ENCODE measurements at regions of chr9 and their contacts with region 1.

Region 1: DNA sequence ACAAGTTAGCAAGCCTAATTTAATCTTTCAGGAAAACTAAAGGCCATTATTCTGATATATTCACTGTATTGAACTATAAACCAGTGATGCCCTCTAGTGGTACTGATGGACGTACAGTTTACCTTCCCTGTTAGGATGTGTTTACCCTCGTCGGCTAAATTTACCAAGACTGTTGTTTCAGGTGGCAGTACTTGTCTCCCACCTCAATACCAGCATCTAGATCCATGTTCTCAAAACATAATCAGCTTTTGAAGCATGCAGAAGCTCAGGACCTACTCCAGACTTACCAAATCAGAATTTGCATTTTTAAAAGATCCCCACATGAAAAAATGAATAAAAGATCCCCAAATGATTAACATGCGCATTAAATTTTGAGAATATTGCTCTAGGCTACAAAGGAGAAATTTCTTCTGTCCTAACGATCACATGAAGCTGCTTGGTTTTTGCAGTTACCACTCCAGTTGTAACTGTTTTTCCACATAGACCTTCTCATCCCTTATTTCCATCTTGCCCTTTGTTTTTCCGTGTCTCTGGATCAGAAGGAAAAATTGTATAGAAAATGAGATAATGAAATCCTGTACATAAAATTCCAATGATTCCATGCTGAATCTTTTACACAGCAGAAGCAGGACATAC is 3.2 kb upstream of the BAAT start:
- DNase-seq: peak in 2 of 4 experiments; percentile 33 to 76
- ATAC-seq: peak; percentile 98
- H3K4me3 ChIP-seq: no peak overlapping the region
- H3K27ac ChIP-seq: no peak overlapping the region
- H3K4me1 ChIP-seq: no peaks in the 10 kb centered on the region
- H3K27me3 ChIP-seq: no peaks in the 10 kb centered on the region
- CTCF ChIP-seq: peak; percentile 47 to 74 (median 55); a peak in 3 of 6 replicates
- EP300 ChIP-seq: no peak
- POLR2A ChIP-seq: no peak
- RAD21 ChIP-seq: peak; percentile 15 to 53; a peak in 2 of 4 replicates

Region 2: DNA sequence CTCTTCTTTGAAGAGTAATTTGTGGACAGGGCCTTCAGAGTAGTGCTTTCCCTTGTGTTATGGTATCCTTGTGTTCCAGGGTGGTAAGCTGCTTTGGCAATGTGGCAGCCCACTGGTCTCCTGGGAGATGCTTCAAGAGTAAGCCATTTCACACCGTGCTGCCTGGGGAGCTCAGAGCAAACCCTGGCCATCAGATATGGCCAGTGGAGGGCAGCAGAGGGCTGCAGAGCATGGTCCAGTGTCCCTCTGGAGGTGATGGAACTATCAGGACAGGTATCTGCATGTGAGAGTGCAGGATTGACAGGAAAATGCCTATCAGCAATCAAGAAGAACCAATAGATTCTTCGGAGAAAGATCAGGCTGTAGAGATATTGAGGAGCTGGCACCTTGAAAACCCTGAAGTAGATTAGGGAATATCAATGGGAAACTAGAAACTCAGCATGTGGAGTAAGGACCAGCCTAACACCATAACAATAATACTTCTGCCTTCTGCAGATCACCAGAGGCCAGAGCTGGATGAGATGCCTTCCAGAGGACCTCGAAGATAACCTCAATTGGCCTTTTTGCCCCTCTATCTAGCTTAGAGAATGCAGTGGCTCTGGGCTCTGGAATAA is 268.7 kb before region 1 on chr9:
- CTCF ChIA-PET with region 1: no interaction called
- POLR2A ChIA-PET with region 1: no interaction called
- in situ Hi-C with region 1: no loop called
- intact Hi-C with region 1: loop called (anchors 2 kb)
- DNase-seq: peak; percentile 29 to 47 (median 38)
- ATAC-seq: peak; percentile 88
- H3K4me3 ChIP-seq: no peak overlapping the region
- H3K27ac ChIP-seq: no peak overlapping the region
- H3K4me1 ChIP-seq: no peaks in the 10 kb centered on the region
- H3K27me3 ChIP-seq: no peaks in the 10 kb centered on the region
- CTCF ChIP-seq: peak; percentile 54 to 70 (median 54)
- EP300 ChIP-seq: no peak
- POLR2A ChIP-seq: no peak
- RAD21 ChIP-seq: peak; percentile 34 to 61

Region 3: DNA sequence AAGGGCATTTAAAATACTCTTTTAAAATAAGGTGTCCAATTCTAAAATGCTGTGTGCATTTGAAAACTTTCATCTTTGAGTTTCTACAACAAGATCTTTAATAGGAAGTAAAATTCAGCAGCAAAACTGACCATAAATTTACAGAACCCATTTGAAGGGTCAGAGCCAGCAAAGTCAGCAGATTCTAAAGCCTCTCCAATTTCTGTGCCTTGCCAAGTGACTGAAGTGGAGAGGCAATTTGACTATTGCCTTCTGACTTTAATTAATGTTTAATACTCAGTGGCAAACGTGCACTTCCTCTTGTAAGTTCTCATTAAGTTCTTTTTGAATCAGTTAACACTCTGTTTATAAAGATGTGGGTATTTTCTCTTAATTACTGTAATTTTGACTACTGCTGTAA is 158.4 kb before region 1 on chr9:
- CTCF ChIA-PET with region 1: no interaction called
- POLR2A ChIA-PET with region 1: no interaction called
- in situ Hi-C with region 1: no loop called
- intact Hi-C with region 1: loop called (anchors 2 kb)
- DNase-seq: no peak
- ATAC-seq: no peak
- H3K4me3 ChIP-seq: no peak overlapping the region
- H3K27ac ChIP-seq: no peak overlapping the region
- H3K4me1 ChIP-seq: no peaks in the 10 kb centered on the region
- H3K27me3 ChIP-seq: no peaks in the 10 kb centered on the region
- CTCF ChIP-seq: no peak
- EP300 ChIP-seq: no peak
- POLR2A ChIP-seq: no peak
- RAD21 ChIP-seq: no peak

Region 4: DNA sequence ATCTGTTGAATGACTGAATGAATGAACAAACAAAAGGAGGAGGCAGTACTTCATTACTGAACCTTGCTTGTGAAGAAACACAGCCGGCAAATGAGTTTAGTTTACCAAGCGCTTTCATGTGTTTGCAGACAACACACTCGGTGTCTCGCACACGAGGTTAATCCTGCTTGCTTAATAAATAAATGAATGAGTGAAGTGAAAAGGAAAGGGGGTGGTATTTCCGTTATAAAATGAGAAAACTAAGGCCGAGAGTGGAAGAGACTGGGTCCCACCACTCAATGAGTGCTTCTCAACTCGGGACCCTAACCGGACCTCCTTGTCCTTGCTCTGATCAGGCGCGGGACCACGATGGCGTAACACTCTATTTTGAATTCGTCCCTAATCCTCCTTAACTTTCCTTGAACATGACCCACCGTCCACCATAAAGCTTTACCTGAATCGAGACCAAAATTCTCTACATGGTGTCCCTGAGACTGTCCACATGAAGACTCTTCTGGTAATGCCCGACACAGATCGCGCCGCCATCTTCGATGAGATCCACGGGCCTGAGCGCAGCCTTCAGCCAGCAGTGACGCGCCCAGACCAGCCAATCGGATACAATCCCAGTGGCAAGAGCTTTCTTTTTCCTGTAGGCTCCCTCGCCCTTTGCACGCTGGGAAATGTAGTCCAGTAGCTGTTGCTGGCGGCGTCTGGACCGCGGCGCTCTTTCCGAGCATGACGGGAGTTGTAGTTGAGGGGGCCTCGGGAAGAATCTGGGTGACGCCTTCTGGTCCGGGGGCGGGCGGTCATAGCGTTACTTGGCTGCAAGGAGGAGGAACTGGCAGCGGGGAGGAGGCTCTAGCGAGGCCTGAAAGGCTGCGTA is 10.3 kb after region 1 on chr9 and contains the starts of genes MRPL50 and ZNF189:
- CTCF ChIA-PET with region 1: no interaction called
- POLR2A ChIA-PET with region 1: interaction called, 13 read pairs
- in situ Hi-C with region 1: no loop called
- intact Hi-C with region 1: no loop called
- DNase-seq: peak; percentile 88 to 98 (median 92)
- ATAC-seq: peak; percentile 97
- H3K4me3 ChIP-seq: peak within 1 kb of the TSS; percentile 79
- H3K27ac ChIP-seq: peak within 1 kb of the TSS; percentile 96
- H3K4me1 ChIP-seq: peaks cover 11 to 17% of the 10 kb centered on the region in 2 experiments; a peak in 3 of 5 replicates
- H3K27me3 ChIP-seq: no peaks in the 10 kb centered on the region
- CTCF ChIP-seq: 0 out of 6 replicates have a peak, but pooled peaks of 1 of the 3 experiments have one; percentile 13
- EP300 ChIP-seq: no peak
- POLR2A ChIP-seq: peak; percentile 98
- RAD21 ChIP-seq: no peak
- polyA plus RNA-seq, gene MRPL50: 80.1 to 107 TPM
- polyA plus RNA-seq, gene ZNF189: 2.4 to 3.5 TPM

Region 5: DNA sequence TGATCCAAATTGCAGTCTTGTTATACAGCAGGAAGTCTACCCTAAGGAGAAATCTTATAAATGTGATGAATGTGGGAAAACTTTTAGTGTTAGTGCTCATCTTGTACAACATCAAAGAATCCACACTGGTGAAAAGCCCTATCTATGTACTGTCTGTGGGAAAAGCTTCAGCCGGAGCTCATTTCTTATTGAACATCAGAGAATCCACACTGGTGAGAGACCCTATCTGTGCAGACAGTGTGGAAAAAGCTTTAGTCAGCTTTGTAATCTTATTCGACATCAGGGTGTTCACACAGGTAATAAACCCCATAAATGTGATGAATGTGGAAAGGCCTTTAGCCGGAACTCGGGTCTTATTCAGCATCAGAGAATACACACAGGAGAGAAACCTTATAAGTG is 21.1 kb after region 1 on chr9:
- CTCF ChIA-PET with region 1: no interaction called
- POLR2A ChIA-PET with region 1: no interaction called
- in situ Hi-C with region 1: no loop called
- intact Hi-C with region 1: no loop called
- DNase-seq: no peak
- ATAC-seq: no peak
- H3K4me3 ChIP-seq: no peak overlapping the region
- H3K27ac ChIP-seq: no peak overlapping the region
- H3K4me1 ChIP-seq: no peaks in the 10 kb centered on the region
- H3K27me3 ChIP-seq: no peaks in the 10 kb centered on the region
- CTCF ChIP-seq: no peak
- EP300 ChIP-seq: no peak
- POLR2A ChIP-seq: no peak
- RAD21 ChIP-seq: no peak